Gastrocnemius medialis (tissue), 4 donors: ENCODE measurements at regions of chr1 and their contacts with region 1.

Region 1: GRCh38 chr1:65958561-65959350 is 166.1 kb downstream of the PDE4B start:
- DNase-seq: no peak
- ATAC-seq: peak in 1 of 2 donors; percentile 52
- H3K4me3 ChIP-seq: no peak overlapping the region
- H3K27ac ChIP-seq: no peak overlapping the region
- H3K4me1 ChIP-seq: no peaks in the 10 kb centered on the region
- H3K27me3 ChIP-seq: no peaks in the 10 kb centered on the region
- CTCF ChIP-seq: peak; percentile 63 to 78 (median 68)
- POLR2A ChIP-seq: no peak

Region 2: GRCh38 chr1:65459397-65459768 is 499.4 kb before region 1 on chr1:
- in situ Hi-C with region 1: no loop called
- intact Hi-C with region 1: no loop called
- DNase-seq: no peak
- ATAC-seq: no peak
- H3K4me3 ChIP-seq: no peak overlapping the region
- H3K27ac ChIP-seq: no peak overlapping the region
- H3K4me1 ChIP-seq: no peaks in the 10 kb centered on the region
- H3K27me3 ChIP-seq: no peaks in the 10 kb centered on the region
- CTCF ChIP-seq: peak in 2 of 5 experiments; percentile 10 to 31
- POLR2A ChIP-seq: no peak

Region 3: DNA sequence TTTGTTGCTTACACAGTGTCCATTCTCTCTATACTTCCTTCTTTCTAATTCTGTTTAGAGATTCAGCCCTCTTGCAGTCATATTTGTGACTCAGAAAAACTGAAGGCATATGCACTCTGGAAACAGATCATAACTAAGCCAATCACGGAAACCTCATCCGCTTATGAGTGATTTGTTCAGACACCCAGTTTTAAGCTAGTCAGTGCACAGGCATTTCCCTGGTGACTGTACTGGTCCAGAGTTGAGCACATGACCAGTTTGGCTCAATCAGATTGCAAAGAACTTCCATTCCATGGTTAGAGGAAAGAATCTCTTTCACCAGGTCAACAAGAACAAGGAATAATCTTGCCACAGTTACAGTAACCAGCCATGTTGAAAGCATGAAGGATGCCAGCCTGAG is 506.0 kb after region 1 on chr1:
- in situ Hi-C with region 1: loop called in 1 of 4 experiments (anchors 25 kb)
- intact Hi-C with region 1: no loop called
- DNase-seq: no peak
- ATAC-seq: no peak
- H3K4me3 ChIP-seq: no peak overlapping the region
- H3K27ac ChIP-seq: no peak overlapping the region
- H3K4me1 ChIP-seq: no peaks in the 10 kb centered on the region
- H3K27me3 ChIP-seq: no peaks in the 10 kb centered on the region
- CTCF ChIP-seq: no peak
- POLR2A ChIP-seq: no peak